Endothelial cell of umbilical vein (primary cell): ENCODE measurements at regions of chr19 and their contacts with region 1.

Region 1: GRCh38 chr19:58519355-58520256 is at the start of gene ZBTB45:
- DNase-seq: peak; percentile 94
- H3K4me3 ChIP-seq: peak within 1 kb of the TSS; percentile 67 to 83 (median 73)
- H3K27ac ChIP-seq: peak within 1 kb of the TSS; percentile 69
- H3K4me1 ChIP-seq: peaks cover 19% of the 10 kb centered on the region
- H3K27me3 ChIP-seq: no peaks in the 10 kb centered on the region
- CTCF ChIP-seq: peak; percentile 69 to 90
- POLR2A ChIP-seq: peak; percentile 64
- total RNA-seq, gene ZBTB45: 21.8 TPM in 2 replicates

Region 2: GRCh38 chr19:58218899-58219298 is 300.7 kb before region 1 on chr19:
- CTCF ChIA-PET with region 1: interaction called, 6 read pairs
- POLR2A ChIA-PET with region 1: no interaction called
- dilution Hi-C with region 1: no loop called
- intact Hi-C with region 1: loop called (anchors 1 kb)
- DNase-seq: peak; percentile 20
- H3K4me3 ChIP-seq: no peak overlapping the region
- H3K27ac ChIP-seq: no peak overlapping the region
- H3K4me1 ChIP-seq: no peaks in the 10 kb centered on the region
- H3K27me3 ChIP-seq: no peaks in the 10 kb centered on the region
- CTCF ChIP-seq: peak in 1 of 2 donors; percentile 50
- POLR2A ChIP-seq: no peak

Region 3: GRCh38 chr19:58326914-58327726 is 192.5 kb before region 1 on chr19 and contains the start of gene ZSCAN22:
- CTCF ChIA-PET with region 1: no interaction called
- POLR2A ChIA-PET with region 1: no interaction called
- dilution Hi-C with region 1: no loop called
- intact Hi-C with region 1: loop called (anchors 1 kb)
- DNase-seq: peak; percentile 96
- H3K4me3 ChIP-seq: peak within 1 kb of the TSS; percentile 3 to 63 (median 56)
- H3K27ac ChIP-seq: peak within 1 kb of the TSS; percentile 1
- H3K4me1 ChIP-seq: peaks cover 12% of the 10 kb centered on the region
- H3K27me3 ChIP-seq: no peaks in the 10 kb centered on the region
- CTCF ChIP-seq: no peak
- POLR2A ChIP-seq: peak; percentile 76
- total RNA-seq, gene ZSCAN22: 3.6 and 3.7 TPM in 2 replicates

Region 4: DNA sequence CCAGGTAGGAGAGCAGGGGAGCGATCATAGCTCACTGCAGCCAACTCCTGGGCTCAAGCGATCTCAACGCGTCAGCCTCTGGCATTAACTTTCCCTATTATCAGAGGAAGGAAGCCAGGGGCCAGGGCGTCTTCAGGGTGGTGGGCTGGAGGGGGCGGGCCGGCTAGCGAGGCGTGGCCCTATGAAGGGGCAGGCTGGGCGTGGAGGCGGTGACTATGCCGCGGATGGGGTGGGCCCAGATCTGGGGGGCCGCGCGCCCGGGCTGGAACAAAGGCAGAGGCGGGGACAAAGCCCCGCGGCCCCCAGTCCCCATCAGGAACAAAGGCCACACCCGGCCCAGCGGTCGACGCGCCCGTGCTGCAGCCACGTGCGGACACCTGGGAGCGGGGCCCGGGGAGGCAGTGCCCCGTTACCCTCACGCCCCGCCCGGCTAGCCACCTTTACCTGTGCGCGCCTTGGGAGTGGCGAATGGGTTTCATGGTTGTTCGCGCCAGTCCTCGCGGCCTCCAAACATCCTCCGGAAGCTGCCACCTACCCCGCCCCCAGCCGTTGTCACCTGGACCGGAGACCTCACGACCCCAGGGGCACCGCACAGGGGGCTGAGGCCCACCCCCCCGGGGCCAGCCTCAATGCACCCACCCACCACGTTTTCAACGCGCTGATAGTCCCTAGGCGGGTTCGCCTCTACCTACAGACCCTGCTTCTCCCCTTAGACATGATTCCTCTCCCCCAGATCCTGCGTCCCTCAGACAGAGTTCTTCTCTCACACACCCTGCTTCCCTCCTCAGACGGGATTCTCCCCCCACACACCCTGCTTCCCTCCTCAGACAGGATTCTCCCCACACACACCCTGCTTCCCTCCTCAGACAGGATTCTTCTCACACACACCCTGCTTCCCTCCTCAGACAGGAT is 18.9 kb after region 1 on chr19:
- CTCF ChIA-PET with region 1: interaction called, 52 read pairs
- POLR2A ChIA-PET with region 1: interaction called, 20 read pairs
- dilution Hi-C with region 1: no loop called
- intact Hi-C with region 1: no loop called
- DNase-seq: peak; percentile 83
- H3K4me3 ChIP-seq: peak overlapping the region; percentile 27 to 32 (median 30)
- H3K27ac ChIP-seq: no peak overlapping the region
- H3K4me1 ChIP-seq: peaks cover 6% of the 10 kb centered on the region
- H3K27me3 ChIP-seq: peaks cover 12 to 21% of the 10 kb centered on the region in 2 experiments
- CTCF ChIP-seq: no peak
- POLR2A ChIP-seq: no peak

Region 5: DNA sequence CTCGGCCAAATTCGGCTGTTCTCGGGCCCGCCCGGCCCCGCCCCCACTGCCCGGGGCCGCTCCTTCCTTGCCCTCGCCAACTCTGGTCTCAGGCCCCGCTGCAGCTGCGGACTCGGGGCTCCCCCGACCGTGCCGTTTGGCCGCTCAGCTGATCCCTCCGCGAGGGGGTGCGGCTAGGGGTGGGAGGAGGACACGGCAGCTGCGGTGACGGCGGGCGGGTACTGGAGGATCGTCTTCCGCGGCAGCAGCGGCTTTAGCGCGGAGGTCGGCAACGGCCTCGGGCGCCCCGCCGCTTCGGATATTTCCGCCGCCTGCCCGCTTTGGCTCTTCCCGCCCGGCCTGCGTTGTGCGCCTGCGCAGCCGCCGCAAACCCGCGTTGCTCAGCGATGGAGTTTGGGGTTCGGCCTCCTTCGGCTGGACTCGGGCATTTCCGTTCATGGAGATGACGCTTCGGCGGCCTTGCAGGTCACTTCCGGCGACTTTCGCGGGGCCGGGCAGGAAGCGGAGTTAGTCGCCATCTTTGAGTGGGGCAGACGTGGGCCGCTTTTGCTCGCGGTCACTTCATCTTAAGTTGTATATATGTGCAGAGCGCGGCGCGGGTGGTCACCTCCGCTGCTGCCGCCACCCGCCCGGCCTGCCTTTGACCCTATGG is 39.1 kb after region 1 on chr19:
- CTCF ChIA-PET with region 1: interaction called, 60 read pairs
- POLR2A ChIA-PET with region 1: no interaction called
- dilution Hi-C with region 1: no loop called
- intact Hi-C with region 1: loop called (anchors 1 kb)
- DNase-seq: peak; percentile 99
- H3K4me3 ChIP-seq: peak overlapping the region; percentile 20 to 63 (median 57)
- H3K27ac ChIP-seq: peak overlapping the region; percentile 83
- H3K4me1 ChIP-seq: peaks cover 47% of the 10 kb centered on the region
- H3K27me3 ChIP-seq: peaks cover 9 to 19% of the 10 kb centered on the region in 2 experiments
- CTCF ChIP-seq: no peak
- POLR2A ChIP-seq: no peak

Region 6: DNA sequence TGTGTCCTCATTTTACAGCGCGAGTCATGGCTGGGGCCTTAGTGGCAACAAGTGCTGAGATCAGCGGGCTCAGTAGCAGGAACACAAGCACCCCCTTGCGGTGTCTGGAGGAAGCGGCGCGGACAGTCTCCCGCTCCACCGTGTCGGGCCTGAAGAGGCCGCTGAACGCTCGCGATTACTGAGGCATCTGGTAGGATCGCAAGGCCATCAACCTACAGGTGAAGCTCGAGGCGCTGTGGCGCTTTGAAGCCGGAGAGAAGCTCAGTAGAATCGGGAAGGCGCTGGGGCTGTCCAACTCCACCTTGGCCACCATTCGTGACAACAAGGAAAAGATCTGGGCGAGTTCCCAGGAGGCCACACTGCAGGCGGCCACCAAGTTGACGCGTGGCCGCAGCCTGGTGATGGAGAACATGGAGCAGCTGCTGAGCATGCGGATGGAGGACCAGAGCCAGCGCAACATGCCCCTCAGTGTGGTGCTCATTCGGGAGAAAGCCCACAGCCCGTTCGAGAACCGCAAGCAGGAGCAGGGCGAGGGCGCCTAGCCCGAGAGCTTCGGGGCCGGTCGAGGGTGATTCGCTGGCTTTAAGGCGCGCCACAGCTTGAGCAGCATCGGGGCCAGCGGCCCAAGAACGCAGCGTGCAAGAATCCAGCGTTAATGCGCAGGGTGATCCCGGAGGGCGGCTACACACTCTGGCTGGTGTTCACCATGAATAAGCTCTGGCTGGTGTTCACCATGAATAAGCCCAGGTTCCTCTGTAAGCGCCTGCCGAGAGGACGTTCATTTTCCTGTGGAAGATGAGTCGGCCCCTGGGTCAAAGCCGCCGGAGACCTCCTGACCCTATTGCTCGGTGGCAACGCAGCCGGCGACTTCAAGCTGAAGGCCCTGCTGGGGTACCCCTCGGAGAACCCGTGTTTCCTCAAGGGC is 61.9 kb after region 1 on chr19:
- CTCF ChIA-PET with region 1: interaction called, 111 read pairs
- POLR2A ChIA-PET with region 1: interaction called, 17 read pairs
- dilution Hi-C with region 1: no loop called
- intact Hi-C with region 1: loop called (anchors 1 kb)
- DNase-seq: peak; percentile 91
- H3K4me3 ChIP-seq: no peak overlapping the region
- H3K27ac ChIP-seq: no peak overlapping the region
- H3K4me1 ChIP-seq: peaks cover 3% of the 10 kb centered on the region
- H3K27me3 ChIP-seq: no peaks in the 10 kb centered on the region
- CTCF ChIP-seq: peak; percentile 99 to 100
- POLR2A ChIP-seq: no peak